AG04449 (cell line): ENCODE measurements at regions of chr17 and their contacts with region 1.

Region 1: DNA sequence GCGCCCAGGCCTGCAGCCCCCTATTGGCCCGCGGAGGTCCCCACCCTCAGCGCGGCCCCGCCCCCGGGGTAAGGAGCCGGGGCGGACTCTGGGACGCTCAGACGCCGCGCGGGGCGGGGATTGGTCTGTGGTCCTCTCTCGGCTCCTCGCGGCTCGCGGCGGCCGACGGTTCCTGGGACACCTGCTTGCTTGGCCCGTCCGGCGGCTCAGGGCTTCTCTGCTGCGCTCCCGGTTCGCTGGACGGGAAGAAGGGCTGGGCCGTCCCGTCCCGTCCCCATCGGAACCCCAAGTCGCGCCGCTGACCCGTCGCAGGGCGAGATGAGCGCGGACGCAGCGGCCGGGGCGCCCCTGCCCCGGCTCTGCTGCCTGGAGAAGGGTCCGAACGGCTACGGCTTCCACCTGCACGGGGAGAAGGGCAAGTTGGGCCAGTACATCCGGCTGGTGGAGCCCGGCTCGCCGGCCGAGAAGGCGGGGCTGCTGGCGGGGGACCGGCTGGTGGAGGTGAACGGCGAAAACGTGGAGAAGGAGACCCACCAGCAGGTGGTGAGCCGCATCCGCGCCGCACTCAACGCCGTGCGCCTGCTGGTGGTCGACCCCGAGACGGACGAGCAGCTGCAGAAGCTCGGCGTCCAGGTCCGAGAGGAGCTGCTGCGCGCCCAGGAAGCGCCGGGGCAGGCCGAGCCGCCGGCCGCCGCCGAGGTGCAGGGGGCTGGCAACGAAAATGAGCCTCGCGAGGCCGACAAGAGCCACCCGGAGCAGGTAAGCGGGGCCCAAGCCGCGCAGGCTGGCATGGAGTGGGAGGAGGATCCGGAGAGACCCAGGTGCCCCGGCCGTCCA is at the start of gene NHERF1:
- DNase-seq: peak; percentile 38
- H3K4me3 ChIP-seq: peak within 1 kb of the TSS; percentile 76
- CTCF ChIP-seq: peak; percentile 18

Region 2: DNA sequence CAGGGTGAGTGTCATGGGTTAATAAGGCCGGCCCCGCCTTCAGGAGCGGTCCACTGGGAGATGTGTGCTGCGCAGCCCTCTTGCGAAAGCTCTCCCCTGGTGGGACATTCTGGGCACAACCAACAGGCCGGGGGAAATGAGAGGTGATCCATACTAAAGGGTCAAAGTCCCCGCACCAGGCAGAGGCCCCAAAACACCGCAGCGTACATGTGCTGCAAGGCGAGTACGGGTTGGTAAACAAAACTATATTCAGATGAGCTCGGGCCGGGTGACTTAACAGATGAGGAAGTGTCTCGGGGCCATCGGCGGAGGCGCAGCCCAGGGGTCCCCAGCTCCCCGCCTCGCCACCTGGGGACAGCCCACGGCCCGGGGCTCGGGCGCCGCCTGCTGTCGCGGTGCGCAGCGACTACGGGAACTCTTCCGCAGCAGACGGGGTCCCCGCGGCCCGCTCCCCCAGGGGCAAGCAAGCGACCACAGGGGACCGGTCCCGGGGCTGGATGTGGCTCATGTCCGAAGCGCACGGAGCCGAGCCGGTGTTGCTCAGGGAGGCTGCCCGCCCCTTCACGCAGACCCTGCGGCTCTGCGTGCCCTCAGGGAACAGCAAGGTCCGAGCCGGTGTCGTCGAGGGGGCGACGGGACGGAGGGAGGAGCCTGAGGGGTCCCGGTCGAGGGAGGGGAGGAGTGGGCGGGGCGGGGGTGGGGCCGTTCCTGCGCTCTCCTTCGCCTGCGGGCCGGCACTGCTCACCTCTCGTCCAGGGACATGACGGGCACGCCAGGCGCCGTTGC is 12.0 kb before region 1 on chr17 and contains the start of gene RAB37:
- CTCF ChIA-PET with region 1: interaction called, 44 read pairs
- POLR2A ChIA-PET with region 1: no interaction called
- DNase-seq: no peak
- H3K4me3 ChIP-seq: no peak within 1 kb of the TSS; the same call in 1 of the 2 replicates
- CTCF ChIP-seq: peak; percentile 18

Region 3: DNA sequence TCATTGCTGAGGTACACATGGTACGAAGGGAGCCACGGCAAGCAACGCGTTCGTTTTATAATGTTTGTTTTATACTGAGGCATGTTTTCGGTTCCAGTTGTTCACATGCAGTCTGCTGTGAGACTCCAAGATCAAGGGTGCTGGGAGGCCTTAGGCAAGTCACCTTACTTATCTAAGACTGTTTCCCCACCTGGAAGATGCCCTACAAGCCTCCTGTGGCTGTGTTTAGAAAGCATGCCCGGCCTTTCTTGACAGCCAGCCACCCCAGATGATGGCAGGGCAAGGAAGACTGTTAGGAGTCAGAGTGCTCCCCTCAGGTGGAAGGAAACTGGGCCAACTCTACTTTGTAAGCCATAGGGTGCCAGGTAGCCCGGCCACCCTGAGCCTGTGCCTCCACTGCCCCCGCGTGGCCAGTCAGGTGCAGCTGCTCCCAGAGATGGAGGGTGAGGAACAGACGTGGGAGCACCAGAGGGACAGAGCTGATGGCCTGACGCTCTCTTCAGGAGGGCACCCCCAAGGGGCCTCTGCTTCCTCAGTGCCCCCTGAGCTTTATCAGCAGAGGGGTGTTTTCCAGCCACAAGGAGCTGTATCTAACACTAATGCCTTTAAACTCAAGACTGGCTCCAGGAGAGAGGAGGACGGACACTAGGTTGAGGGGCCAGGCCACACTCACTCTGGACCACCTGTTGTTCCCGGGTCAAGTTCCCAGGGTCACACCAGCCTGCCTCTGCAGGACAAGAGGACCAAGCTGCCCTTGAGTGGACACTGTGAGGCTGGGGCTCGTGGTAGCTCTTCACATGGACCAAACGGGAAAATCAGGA is 22.0 kb after region 1 on chr17:
- CTCF ChIA-PET with region 1: interaction called, 150 read pairs
- POLR2A ChIA-PET with region 1: interaction called, 6 read pairs
- DNase-seq: no peak
- H3K4me3 ChIP-seq: no peak overlapping the region
- CTCF ChIP-seq: peak; percentile 91

Region 4: DNA sequence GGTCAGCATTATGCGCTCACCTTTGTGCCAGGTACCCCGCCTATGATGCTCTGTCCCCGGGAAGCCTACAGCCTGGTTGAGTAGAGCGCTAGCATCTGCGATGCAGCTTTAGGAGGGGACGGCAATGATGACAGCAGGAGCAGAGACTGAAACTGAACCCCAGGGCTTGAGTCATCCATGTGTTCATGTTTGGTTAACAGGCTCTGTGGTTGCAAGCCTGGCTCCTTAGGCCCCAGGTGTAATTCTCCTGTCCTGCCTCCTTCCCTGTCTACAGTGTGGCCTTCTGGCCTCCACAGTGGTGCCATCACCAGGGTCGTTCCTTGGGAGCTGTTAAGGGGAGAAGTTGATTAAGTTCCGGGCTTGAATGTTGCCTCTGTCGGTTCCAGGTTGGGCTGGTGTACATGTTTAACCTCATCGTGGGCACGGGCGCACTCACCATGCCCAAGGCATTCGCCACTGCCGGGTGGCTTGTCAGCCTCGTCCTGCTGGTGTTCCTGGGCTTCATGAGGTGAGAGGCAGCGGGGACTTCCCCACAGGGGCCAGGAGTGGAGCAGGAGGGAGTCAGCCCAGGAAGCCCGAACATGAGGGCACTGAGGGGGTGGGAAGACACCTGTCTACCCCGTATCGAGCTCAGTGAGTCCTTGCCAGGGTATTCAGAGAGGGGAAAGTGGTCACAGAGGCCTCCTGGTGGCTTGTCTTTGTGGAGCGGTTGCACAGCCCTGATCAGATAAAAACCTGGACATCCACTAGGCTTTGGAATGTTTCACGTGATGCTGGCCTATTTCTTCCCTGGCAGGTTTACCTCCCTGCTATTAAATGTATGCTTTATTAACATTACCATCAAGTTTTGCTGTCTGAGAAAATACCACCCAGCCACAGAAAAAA is 36.6 kb after region 1 on chr17:
- CTCF ChIA-PET with region 1: interaction called, 32 read pairs
- POLR2A ChIA-PET with region 1: no interaction called
- DNase-seq: no peak
- H3K4me3 ChIP-seq: no peak overlapping the region
- CTCF ChIP-seq: no peak

Region 5: GRCh38 chr17:74842599-74843351 is 94.0 kb after region 1 on chr17:
- CTCF ChIA-PET with region 1: interaction called, 10 read pairs
- POLR2A ChIA-PET with region 1: no interaction called
- DNase-seq: no peak
- H3K4me3 ChIP-seq: peak overlapping the region; percentile 42
- CTCF ChIP-seq: peak; percentile 71